WTC11 (cell line): ENCODE measurements at regions of chr11 and their contacts with region 1.

Region 1: GRCh38 chr11:73350908-73351636 is 25.1 kb upstream of the RELT start:
- DNase-seq: peak; percentile 50
- ATAC-seq: peak; percentile 40
- H3K4me3 Mint-ChIP-seq: no peak overlapping the region
- H3K27ac Mint-ChIP-seq: no peak overlapping the region
- H3K4me1 Mint-ChIP-seq: peaks cover 2% of the 10 kb centered on the region; the same call in 1 of the 2 replicates
- H3K27me3 Mint-ChIP-seq: no peaks in the 10 kb centered on the region
- CTCF ChIP-seq: peak; percentile 96

Region 2: GRCh38 chr11:73288873-73289707 is 62.0 kb before region 1 on chr11:
- CTCF ChIA-PET with region 1: interaction called, 20 read pairs
- POLR2A ChIA-PET with region 1: no interaction called
- DNase-seq: peak; percentile 85
- ATAC-seq: peak; percentile 85
- H3K4me3 Mint-ChIP-seq: no peak overlapping the region
- H3K27ac Mint-ChIP-seq: no peak overlapping the region
- H3K4me1 Mint-ChIP-seq: peaks cover 9% of the 10 kb centered on the region
- H3K27me3 Mint-ChIP-seq: peaks cover 9% of the 10 kb centered on the region
- CTCF ChIP-seq: peak; percentile 81

Region 3: GRCh38 chr11:73314117-73314961 is 36.7 kb before region 1 on chr11:
- CTCF ChIA-PET with region 1: interaction called, 127 read pairs
- POLR2A ChIA-PET with region 1: interaction called, 3 read pairs
- DNase-seq: peak; percentile 28
- ATAC-seq: peak; percentile 46
- H3K4me3 Mint-ChIP-seq: no peak overlapping the region
- H3K27ac Mint-ChIP-seq: no peak overlapping the region
- H3K4me1 Mint-ChIP-seq: peaks cover 27% of the 10 kb centered on the region
- H3K27me3 Mint-ChIP-seq: peaks cover 20% of the 10 kb centered on the region
- CTCF ChIP-seq: no peak

Region 4: GRCh38 chr11:73376160-73376802 is 25.2 kb after region 1 on chr11 and contains the start of gene RELT:
- CTCF ChIA-PET with region 1: interaction called, 60 read pairs
- POLR2A ChIA-PET with region 1: no interaction called
- DNase-seq: peak; percentile 93
- ATAC-seq: peak; percentile 95
- H3K4me3 Mint-ChIP-seq: peak within 1 kb of the TSS; percentile 70
- H3K27ac Mint-ChIP-seq: no peak within 1 kb of the TSS
- H3K4me1 Mint-ChIP-seq: peaks cover 12% of the 10 kb centered on the region
- H3K27me3 Mint-ChIP-seq: peaks cover 16% of the 10 kb centered on the region
- CTCF ChIP-seq: peak; percentile 71
- total RNA-seq, gene RELT: 5.7 to 6.7 TPM (median 5.9 TPM) in 3 replicates

Region 5: DNA sequence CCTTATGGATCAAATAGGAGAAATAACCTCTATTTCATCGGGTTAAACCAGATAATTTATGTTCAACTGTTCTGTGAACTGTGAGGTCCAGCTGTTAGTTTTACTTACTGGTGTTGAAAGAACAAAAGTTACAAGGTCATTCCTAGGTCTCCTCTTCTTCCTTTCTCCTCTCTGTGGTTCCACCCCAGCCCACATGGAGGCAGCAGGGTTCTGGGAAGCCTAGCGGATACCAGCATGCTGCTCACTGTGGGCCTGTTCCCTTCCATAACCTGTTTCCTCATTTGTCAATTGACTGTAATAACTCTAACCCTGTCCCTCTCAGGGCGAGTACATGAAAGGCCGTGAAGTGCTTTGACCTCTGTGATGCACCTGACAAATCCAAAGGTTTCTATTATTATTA is 53.0 kb after region 1 on chr11:
- CTCF ChIA-PET with region 1: interaction called, 21 read pairs
- POLR2A ChIA-PET with region 1: no interaction called
- DNase-seq: peak; percentile 66
- ATAC-seq: peak; percentile 91
- H3K4me3 Mint-ChIP-seq: no peak overlapping the region
- H3K27ac Mint-ChIP-seq: no peak overlapping the region
- H3K4me1 Mint-ChIP-seq: peaks cover 6% of the 10 kb centered on the region
- H3K27me3 Mint-ChIP-seq: no peaks in the 10 kb centered on the region
- CTCF ChIP-seq: no peak